Activated CD4-positive, alpha-beta T cell treated with anti-CD3 and anti-CD28 coated beads, Interleukin-2, amount 10 ng/mL, durations not matched to agents 24 days and 14 days (primary cell): ENCODE measurements at regions of chr12 and their contacts with region 1.

Region 1: GRCh38 chr12:121688966-121689365 is 19.5 kb upstream of the MORN3 start:
- DNase-seq: no peak
- H3K4me3 Mint-ChIP-seq: no peak overlapping the region
- H3K27ac Mint-ChIP-seq: peak overlapping the region; percentile 34
- H3K4me1 Mint-ChIP-seq: peaks cover 4% of the 10 kb centered on the region
- H3K27me3 Mint-ChIP-seq: peaks cover 6% of the 10 kb centered on the region

Region 2: DNA sequence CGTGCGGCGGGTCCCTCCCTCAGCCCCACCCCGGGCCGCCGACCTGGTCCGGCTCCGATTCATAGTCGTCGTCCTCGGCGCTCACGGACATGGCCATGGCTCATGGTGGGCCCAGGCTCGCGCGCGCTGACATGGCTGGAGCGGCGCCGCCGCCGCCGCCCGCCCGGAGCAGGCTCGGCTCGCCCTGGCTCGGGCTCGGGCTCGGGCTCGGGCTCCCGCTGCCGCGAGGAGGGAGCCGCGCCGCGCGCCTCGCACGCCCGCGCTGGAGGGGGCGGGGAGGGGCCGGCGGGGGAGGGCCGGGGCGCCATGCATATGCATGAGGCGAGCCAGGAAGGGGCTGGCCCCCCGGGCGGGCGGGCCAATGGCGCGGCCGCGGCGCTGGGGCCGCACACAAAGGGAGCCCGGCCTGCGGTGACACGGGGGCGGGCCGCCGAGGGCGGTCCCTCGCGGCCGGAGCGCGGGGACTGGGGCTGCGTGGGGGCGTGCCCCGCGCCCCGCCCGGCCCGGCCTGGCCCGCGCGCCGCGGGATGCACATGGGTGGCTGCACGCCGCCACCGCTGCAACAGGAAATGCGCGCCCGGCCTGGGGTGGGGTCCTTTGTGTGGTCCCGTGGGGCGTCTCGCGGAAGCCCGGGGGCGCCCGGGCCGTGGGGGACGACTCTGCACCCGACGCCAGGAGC is 221.7 kb before region 1 on chr12:
- intact Hi-C with region 1: loop called (anchors 1 kb)
- DNase-seq: peak; percentile 97
- H3K4me3 Mint-ChIP-seq: peak overlapping the region; percentile 56
- H3K27ac Mint-ChIP-seq: peak overlapping the region; percentile 29
- H3K4me1 Mint-ChIP-seq: peaks cover 18% of the 10 kb centered on the region
- H3K27me3 Mint-ChIP-seq: no peaks in the 10 kb centered on the region

Region 3: GRCh38 chr12:121590476-121591143 is 98.4 kb before region 1 on chr12:
- intact Hi-C with region 1: loop called (anchors 1 kb)
- DNase-seq: peak; percentile 91
- H3K4me3 Mint-ChIP-seq: peak overlapping the region; percentile 84
- H3K27ac Mint-ChIP-seq: peak overlapping the region; percentile 97
- H3K4me1 Mint-ChIP-seq: peaks cover 40% of the 10 kb centered on the region
- H3K27me3 Mint-ChIP-seq: no peaks in the 10 kb centered on the region

Region 4: GRCh38 chr12:121668750-121669520 is 20.0 kb before region 1 on chr12:
- intact Hi-C with region 1: loop called (anchors 1 kb)
- DNase-seq: peak; percentile 85
- H3K4me3 Mint-ChIP-seq: no peak overlapping the region
- H3K27ac Mint-ChIP-seq: peak overlapping the region; percentile 11
- H3K4me1 Mint-ChIP-seq: peaks cover 43% of the 10 kb centered on the region
- H3K27me3 Mint-ChIP-seq: no peaks in the 10 kb centered on the region

Region 5: DNA sequence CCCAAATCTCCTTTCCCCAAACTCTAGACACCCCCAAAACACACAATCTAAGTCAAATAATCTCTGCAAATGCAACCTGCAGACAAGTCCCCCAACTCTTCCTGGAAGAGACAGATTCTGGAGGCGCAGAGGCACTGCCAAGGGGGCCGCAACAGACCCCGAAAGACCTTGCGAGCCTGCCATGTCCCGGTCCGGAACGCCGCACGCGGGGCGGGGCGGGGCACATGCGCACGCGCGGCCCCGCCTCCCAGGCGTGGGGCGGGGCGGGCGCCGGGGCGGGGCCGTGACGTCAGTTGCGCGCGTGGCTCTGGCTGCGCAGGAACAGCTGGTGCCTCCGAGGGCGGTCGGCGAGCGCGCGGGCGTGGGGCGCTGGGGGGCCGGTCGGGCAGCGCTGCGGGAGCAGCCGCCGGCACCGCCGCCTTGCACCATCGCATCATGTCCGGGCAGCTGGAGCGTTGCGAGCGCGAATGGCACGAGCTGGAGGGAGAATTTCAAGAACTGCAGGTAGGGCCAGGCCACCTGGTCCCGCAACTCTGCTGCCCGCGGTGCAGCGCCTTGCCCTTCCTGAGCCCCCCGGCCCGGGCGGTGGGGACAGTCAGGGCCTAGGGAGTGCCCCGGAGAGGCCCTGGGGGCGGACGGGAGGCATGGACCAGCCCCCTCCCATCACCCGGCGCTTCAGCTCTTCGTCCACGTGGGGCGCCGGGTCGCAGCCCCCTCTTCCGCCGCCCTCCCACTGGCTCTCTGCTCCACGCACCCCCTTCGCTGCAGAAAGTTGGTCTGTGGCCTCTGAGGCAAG is 23.7 kb after region 1 on chr12 and contains the start of gene TMEM120B:
- intact Hi-C with region 1: loop called (anchors 2 kb)
- DNase-seq: peak; percentile 96
- H3K4me3 Mint-ChIP-seq: peak within 1 kb of the TSS; percentile 90
- H3K27ac Mint-ChIP-seq: peak within 1 kb of the TSS; percentile 96
- H3K4me1 Mint-ChIP-seq: peaks cover 25% of the 10 kb centered on the region
- H3K27me3 Mint-ChIP-seq: no peaks in the 10 kb centered on the region
- total RNA-seq, gene TMEM120B: 17.1 and 18.4 TPM in 2 replicates